ENCODE measurements at regions of chr4 and their contacts with region 1.

Region 1: GRCh38 chr4:126627255-126627654 is 1005.5 kb upstream of the INTU start:
- ATAC-seq: peak in 2 of 8 experiments; percentile 48
- H3K4me3 ChIP-seq: no peak overlapping the region
- H3K27ac ChIP-seq: no peak overlapping the region
- H3K4me1 ChIP-seq: no peaks in the 10 kb centered on the region

Region 2: GRCh38 chr4:127124920-127125319 is 497.7 kb after region 1 on chr4:
- in situ Hi-C with region 1: loop called in 1 of 9 experiments (anchors 25 kb)
- ATAC-seq: peak in 3 of 8 experiments; percentile 35 to 53 (median 49)
- H3K4me3 ChIP-seq: no peak overlapping the region
- H3K27ac ChIP-seq: no peak overlapping the region
- H3K4me1 ChIP-seq: peaks cover 2% of the 10 kb centered on the region in 2 donors